ENCODE measurements at regions of chr5 and their contacts with region 1.

Region 1: DNA sequence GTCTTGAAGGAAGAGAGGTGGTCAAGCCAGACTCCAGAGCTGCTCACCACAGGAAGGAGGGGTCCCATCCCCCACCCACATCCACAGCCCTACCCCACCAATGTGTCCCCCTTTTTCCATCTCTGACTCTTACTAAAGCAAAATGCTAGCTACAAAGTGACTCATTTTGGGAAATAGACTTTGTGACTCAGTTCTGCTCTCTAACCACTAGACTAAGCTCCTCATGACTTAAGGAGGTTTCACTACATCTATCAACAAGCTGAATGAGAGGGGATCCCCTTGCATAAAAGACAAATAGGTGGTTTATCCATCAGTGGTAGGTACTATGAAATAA is 35.1 kb upstream of the ADRB2 start:
- DNase-seq: peak; percentile 96
- H3K4me3 ChIP-seq: peak overlapping the region in 2 of 3 experiments; percentile 6 to 15
- H3K27ac ChIP-seq: peak overlapping the region; percentile 99
- H3K4me1 ChIP-seq: peaks cover 41% of the 10 kb centered on the region
- H3K27me3 ChIP-seq: no peaks in the 10 kb centered on the region
- CTCF ChIP-seq: no peak

Region 2: GRCh38 chr5:148740966-148741742 is 50.1 kb before region 1 on chr5:
- CTCF ChIA-PET with region 1: interaction called, 4 read pairs
- dilution Hi-C with region 1: loop called (anchors 5 kb)
- in situ Hi-C with region 1: no loop called
- intact Hi-C with region 1: no loop called
- DNase-seq: peak; percentile 58
- H3K4me3 ChIP-seq: no peak overlapping the region
- H3K27ac ChIP-seq: no peak overlapping the region
- H3K4me1 ChIP-seq: no peaks in the 10 kb centered on the region
- H3K27me3 ChIP-seq: no peaks in the 10 kb centered on the region
- CTCF ChIP-seq: peak; percentile 66 to 77

Region 3: GRCh38 chr5:148768806-148769415 is 22.4 kb before region 1 on chr5:
- CTCF ChIA-PET with region 1: no interaction called
- dilution Hi-C with region 1: no loop called
- in situ Hi-C with region 1: no loop called
- intact Hi-C with region 1: no loop called
- DNase-seq: no peak
- H3K4me3 ChIP-seq: no peak overlapping the region
- H3K27ac ChIP-seq: no peak overlapping the region
- H3K4me1 ChIP-seq: peaks cover 18% of the 10 kb centered on the region
- H3K27me3 ChIP-seq: no peaks in the 10 kb centered on the region
- CTCF ChIP-seq: no peak

Region 4: GRCh38 chr5:148831590-148832565 is 40.6 kb after region 1 on chr5:
- CTCF ChIA-PET with region 1: no interaction called
- dilution Hi-C with region 1: loop called (anchors 5 kb)
- in situ Hi-C with region 1: no loop called
- intact Hi-C with region 1: loop called (anchors 2 kb)
- DNase-seq: no peak
- H3K4me3 ChIP-seq: peak overlapping the region in 1 of 3 experiments; percentile 81
- H3K27ac ChIP-seq: no peak overlapping the region
- H3K4me1 ChIP-seq: peaks cover 27% of the 10 kb centered on the region
- H3K27me3 ChIP-seq: no peaks in the 10 kb centered on the region
- CTCF ChIP-seq: no peak

Region 5: GRCh38 chr5:148984333-148984732 is 193.0 kb after region 1 on chr5:
- CTCF ChIA-PET with region 1: no interaction called
- dilution Hi-C with region 1: loop called (anchors 5 kb)
- in situ Hi-C with region 1: no loop called
- intact Hi-C with region 1: no loop called
- DNase-seq: peak; percentile 94
- H3K4me3 ChIP-seq: no peak overlapping the region
- H3K27ac ChIP-seq: peak overlapping the region; percentile 100
- H3K4me1 ChIP-seq: peaks cover 51% of the 10 kb centered on the region
- H3K27me3 ChIP-seq: no peaks in the 10 kb centered on the region
- CTCF ChIP-seq: no peak